Spleen (tissue), 13 donors: ENCODE measurements at regions of chr1 and their contacts with region 1.

Region 1: DNA sequence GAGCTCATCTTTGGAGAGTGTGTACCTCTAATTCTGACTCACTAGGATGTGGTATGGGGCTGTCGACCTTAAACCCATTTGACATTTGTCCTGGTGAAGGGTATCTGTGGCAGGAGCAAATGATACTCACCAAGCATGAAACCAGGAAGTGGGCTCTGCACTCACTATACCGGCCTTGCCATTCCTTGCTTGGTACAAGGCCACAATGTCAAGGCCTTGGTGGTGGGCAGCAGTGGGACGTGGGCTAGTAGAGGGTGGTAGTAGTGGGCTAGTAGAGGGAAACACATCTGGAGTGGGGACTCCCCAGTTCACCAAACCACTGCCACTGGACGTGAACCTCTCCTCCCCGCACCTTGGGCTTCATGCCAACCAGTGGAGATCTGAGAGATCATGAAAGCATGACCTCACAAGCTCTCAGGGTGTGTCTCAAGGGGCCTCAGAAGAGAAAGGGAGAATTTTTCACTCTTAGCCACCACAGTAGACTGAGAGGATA is 11.5 kb downstream of the TNFSF4 start:
- DNase-seq: peak; percentile 71
- H3K4me3 ChIP-seq: no peak overlapping the region
- H3K27ac ChIP-seq: peak overlapping the region in 2 of 8 donors; percentile 7 to 12
- H3K4me1 ChIP-seq: peaks cover 2 to 26% (median 5%) of the 10 kb centered on the region in 6 donors
- H3K27me3 ChIP-seq: no peaks in the 10 kb centered on the region
- CTCF ChIP-seq: no peak
- POLR2A ChIP-seq: no peak

Region 2: DNA sequence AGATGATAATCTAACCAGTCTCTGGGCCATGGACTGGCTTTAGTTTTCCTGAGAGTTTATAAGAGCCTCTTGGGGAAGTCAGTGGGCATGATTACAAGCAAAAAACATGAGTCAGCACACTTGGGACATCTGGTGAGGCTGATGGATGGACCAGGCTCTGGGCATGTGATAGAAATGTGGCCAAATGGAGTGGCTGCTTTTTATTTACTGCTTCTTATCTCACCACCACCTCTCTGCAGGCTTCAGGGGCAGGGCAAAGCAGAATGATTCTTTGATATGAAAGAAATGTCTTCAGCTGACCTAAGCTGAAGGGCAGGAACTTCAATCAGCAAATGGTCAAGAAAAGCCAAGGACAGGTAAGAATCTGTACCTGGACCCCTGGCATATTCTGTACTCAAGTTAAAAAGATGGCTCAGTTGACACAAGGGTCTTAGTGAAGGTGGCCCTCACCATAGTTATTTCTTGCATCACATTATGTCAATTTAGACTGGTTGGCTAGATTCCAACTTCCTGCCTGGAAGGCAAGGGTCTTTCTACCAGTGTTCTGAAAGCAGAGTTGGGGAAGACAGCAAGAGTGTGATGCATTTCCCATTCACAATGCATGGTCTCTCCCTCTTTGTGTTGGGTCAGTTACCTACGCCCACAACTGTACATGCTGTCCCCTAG is 373.9 kb before region 1 on chr1:
- intact Hi-C with region 1: loop called (anchors 5 kb)
- DNase-seq: no peak
- H3K4me3 ChIP-seq: no peak overlapping the region
- H3K27ac ChIP-seq: peak overlapping the region in 2 of 8 donors; percentile 13 to 22
- H3K4me1 ChIP-seq: peaks cover 12 to 57% (median 34%) of the 10 kb centered on the region in 6 donors
- H3K27me3 ChIP-seq: no peaks in the 10 kb centered on the region
- CTCF ChIP-seq: no peak
- POLR2A ChIP-seq: no peak

Region 3: GRCh38 chr1:173280899-173281660 is 85.4 kb after region 1 on chr1:
- intact Hi-C with region 1: no loop called
- DNase-seq: no peak
- H3K4me3 ChIP-seq: no peak overlapping the region
- H3K27ac ChIP-seq: no peak overlapping the region
- H3K4me1 ChIP-seq: no peaks in the 10 kb centered on the region
- H3K27me3 ChIP-seq: no peaks in the 10 kb centered on the region
- CTCF ChIP-seq: no peak
- POLR2A ChIP-seq: no peak